Cardiac septum (tissue), 1 donor: ENCODE measurements at regions of chr5 and their contacts with region 1.

Region 1: GRCh38 chr5:55439008-55439407 is 95.8 kb downstream of the PLPP1 start:
- DNase-seq: no peak

Region 2: DNA sequence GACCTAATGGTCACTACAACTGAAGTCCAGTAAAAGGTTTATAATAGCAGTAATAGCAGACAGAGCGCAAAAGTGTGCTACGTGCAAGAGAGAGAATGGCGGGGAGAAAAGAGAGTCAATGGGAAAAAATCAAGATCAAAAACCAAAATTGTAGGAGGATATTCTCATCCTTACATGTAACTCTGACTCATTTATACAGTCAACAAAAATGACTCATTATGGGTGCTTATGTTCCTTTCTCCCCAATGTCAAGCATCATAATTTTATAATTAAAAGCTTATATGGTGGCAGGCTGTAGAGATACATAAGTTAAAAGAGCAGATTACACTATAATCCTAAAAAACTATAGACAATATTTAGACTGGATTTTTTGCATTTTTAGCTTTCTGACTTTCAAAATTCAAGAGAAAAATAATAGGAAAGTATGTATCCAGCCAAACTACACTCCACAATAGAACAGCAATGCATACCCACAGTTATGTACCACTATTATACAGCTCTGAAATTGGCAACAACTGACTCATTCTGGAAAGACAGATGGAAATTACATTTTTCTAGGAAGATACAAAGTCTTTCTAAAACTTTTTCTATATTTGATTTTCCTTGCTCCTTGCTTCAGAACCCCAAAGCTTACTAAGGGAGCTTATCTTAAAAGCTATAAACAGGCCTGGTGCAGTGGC is 17.3 kb after region 1 on chr5:
- intact Hi-C with region 1: no loop called
- DNase-seq: no peak

Region 3: DNA sequence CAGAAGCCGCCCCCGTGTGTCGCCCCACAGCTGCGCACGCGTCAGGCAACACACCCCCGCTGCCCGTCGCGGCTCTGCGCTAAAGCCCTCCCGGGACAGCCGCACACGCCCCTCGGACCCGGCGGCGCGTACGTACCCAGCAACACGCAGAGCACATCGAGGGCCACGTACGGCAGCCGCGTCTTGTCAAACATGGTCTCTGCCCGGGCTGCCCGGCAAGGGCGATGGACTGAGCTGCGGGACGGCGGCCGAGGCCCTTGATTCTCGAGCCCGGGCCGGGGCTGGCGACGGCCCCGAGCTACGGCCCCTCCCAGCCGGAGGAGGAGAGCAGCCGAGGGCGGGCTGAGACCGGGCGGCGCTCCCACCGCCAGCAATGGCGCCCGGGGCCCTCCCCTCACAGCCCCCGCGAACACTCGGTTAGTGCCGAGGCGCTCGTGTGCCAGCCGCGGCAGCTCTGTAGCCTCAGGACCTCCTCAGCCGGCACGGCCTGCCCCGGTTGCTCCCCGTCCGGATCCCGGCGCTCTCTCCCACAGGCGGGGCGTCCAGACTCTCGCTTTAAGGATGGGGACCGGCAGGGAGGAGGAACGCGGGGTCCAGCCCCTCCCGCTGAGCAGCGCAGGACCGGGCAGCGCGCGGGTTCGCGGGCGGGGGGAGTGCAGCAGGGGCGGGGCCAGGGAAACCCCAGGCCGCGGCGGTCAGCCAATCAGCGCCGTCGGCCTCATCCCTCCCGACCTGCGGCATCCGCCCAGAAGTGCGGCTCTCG is 95.6 kb after region 1 on chr5 and contains the start of gene PLPP1:
- intact Hi-C with region 1: loop called (anchors 5 kb)
- DNase-seq: peak; percentile 96
- total RNA-seq, gene PLPP1: 102 TPM

Region 4: DNA sequence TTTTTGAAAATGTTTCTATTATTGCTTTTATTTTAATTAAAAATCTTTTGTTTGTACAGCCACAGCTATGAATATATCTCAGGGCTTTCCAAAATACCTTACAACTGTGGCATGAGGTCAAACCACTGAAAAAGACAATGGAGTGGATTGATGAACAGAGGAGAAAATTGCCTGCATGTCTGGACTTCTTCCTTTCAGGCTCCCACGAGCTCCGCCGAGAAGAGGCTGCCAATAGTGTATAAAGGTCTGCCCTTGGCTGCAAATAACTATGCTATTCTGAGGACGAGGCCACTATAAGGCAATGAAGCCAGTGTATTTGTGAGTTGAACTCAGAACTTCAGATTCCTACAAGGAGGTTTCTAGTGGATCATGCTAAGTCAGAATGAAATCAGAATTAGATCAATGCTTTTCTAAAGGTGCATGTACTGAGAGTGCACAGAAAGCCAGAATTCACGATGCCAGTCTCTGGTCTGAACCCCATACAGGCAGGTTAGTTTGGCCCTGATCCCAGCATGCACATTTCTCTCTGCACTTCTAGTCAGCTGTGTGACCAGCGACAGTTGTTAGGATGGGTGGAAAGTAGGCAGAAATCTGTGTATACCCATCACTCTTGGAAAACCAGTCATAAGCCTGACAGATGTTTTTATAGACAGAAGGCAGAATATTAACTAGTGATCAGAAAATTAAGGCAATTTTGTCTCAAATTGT is 138.5 kb after region 1 on chr5:
- intact Hi-C with region 1: loop called (anchors 5 kb)
- DNase-seq: no peak